GM10248 (cell line): ENCODE measurements at regions of chr21 and their contacts with region 1.

Region 1: GRCh38 chr21:42309753-42310221 is 5.4 kb downstream of the TFF3 start:
- DNase-seq: peak; percentile 84
- CTCF ChIP-seq: peak; percentile 97

Region 2: GRCh38 chr21:42176859-42177258 is 132.9 kb before region 1 on chr21:
- CTCF ChIA-PET with region 1: no interaction called
- POLR2A ChIA-PET with region 1: no interaction called
- DNase-seq: no peak
- CTCF ChIP-seq: no peak

Region 3: DNA sequence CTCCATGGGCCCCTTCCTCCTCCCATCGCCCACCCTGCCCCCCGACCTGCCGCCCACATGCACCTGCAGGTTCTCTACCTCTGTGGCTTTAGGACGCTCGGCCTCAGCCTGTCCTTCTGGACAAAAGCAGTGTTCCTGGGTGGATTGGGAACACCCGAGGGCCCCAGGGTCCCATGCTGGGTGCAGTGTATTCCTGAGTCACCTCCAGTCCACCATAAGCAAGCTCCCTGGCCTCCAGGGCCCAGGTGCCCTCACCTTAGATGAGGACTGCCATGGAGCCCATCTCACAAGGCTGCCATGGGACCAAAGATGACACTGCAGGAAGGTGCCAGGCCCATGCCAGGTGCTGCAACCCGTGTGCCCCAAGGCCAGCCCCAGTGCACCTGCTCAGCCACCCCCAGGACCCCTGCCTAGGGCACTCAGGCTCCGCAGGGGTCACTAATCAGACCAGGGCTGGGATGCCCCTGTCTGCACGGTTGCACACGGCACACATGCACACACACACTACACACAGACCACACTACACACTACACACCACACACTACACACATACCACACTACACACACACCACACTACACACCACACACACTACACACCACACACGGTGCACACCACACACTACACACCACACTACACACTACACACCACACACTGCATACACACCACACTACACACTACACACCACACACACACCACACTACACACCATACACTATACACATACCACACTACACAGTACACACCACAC is 17.5 kb before region 1 on chr21:
- CTCF ChIA-PET with region 1: interaction called, 12 read pairs
- POLR2A ChIA-PET with region 1: no interaction called
- DNase-seq: no peak
- CTCF ChIP-seq: no peak

Region 4: GRCh38 chr21:42330380-42331359 is 20.9 kb after region 1 on chr21:
- CTCF ChIA-PET with region 1: interaction called, 30 read pairs
- POLR2A ChIA-PET with region 1: interaction called, 3 read pairs
- DNase-seq: peak; percentile 52
- CTCF ChIP-seq: no peak

Region 5: DNA sequence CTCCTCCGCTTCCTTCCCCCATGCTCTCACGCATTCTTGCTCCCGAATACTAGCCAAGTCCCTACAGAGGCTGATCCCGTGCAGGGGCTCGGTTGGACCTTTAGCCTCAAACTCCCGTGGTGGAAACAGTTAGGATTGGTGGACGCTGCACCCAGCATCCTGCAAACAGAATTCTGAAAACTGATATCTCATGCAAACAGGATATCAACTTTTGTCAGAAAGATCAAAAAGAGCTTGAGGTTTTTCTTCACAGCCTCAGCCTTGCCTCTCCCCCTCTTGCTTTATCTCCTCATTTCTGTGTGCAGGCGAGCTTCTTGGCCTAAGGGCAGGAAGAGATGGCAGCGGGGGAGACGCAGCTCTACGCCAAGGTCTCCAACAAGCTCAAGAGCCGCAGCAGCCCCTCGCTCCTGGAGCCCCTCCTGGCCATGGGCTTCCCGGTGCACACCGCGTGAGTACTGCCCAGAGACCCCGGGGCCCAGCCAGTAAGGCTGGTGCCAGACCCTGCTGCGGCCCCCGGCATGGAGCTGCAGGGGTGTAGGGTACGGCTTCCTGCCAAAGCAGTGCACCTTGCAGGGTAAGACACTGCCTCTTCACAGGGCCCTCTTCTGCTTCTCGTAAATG is 93.9 kb after region 1 on chr21 and contains the start of gene UBASH3A:
- CTCF ChIA-PET with region 1: interaction called, 12 read pairs
- POLR2A ChIA-PET with region 1: no interaction called
- DNase-seq: no peak
- CTCF ChIP-seq: no peak

Region 6: DNA sequence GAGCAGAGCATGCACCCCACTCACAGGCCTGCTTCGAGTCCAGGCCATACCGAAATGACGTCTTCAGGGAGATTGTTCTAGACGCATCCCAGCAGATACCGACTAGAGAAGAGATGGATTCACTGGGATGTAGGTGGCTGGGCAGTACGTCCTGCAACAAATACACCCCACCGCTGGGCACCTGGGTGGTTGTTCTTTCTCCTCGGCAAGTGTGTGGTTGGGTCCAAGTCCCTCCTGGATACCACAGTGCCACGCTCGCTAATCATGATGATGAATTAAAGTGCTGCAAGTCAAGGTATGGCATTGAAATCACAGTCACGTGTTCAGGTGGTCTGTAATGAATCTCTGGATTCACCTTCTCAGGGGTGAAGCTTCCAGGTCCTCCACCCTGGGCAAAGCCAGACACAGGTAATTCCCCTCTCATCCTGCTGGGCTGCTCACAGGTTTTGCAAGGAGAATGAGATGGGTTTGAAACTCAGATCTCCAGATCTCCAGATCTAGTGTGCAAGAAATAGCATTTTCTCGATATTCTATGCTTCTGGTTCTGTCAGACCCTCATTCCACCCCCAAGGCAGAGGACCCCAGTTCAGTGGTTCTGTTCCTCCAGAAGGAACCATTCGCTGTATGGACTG is 139.6 kb after region 1 on chr21:
- CTCF ChIA-PET with region 1: interaction called, 49 read pairs
- POLR2A ChIA-PET with region 1: no interaction called
- DNase-seq: no peak
- CTCF ChIP-seq: no peak